Ovary (tissue), 10 donors: ENCODE measurements at regions of chr3 and their contacts with region 1.

Region 1: GRCh38 chr3:138230525-138230924 is 43.4 kb downstream of the ARMC8 start:
- DNase-seq: no peak
- H3K4me3 ChIP-seq: no peak overlapping the region
- H3K27ac ChIP-seq: no peak overlapping the region
- H3K4me1 ChIP-seq: no peaks in the 10 kb centered on the region
- H3K27me3 ChIP-seq: no peaks in the 10 kb centered on the region
- CTCF ChIP-seq: no peak
- EP300 ChIP-seq: no peak
- POLR2A ChIP-seq: no peak

Region 2: DNA sequence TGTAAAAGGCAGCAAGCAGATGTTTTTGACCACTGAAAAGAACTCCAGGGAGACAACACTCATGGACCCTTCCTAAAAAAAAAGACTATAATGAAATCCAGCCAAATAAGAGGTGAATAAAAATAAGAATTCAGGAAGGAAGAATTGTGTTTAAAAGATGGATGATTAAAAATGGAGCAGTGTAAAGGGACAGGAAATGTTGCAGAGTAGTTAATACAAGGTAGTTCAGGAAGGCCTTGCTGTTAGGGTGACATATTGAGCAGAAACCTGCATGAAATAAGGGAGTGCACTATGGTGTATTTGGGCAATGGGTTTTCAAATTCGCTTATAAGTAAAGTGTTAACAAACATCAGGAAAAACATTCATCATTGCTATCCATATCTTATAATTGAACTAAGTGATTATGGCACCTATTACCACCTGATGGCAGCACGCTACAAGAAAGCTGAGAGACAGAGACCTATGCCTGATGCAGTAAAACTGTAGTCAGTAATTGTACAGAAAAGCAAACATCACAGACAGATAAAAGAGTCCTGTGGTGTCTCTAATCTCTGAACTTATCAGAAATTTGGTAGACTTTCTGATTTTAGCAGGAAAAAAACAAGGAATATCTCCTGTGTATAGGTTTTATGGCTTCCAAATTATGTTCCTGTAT is 50.0 kb before region 1 on chr3:
- intact Hi-C with region 1: loop called in 1 of 4 experiments (anchors 5 kb)
- DNase-seq: no peak
- H3K4me3 ChIP-seq: no peak overlapping the region
- H3K27ac ChIP-seq: no peak overlapping the region
- H3K4me1 ChIP-seq: no peaks in the 10 kb centered on the region
- H3K27me3 ChIP-seq: no peaks in the 10 kb centered on the region
- CTCF ChIP-seq: no peak
- EP300 ChIP-seq: no peak
- POLR2A ChIP-seq: no peak

Region 3: DNA sequence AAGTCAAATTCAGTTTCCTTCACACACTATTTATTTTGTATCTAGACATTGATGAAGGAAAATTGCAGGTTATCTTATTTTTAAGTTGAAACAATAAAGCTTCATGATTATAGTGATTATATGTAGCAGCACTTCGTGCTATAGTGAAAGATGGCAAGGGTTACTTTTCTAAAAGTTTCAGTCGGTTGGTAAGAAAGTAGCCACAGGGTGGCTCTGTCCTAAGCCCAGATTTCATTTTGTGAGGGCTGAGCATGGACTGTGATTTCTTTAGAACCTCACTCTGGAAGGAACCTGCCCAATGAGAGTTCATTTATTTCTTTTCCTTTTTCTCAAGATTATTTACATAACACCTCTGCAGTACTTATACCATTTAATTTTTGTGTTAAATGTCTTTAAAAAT is 32.6 kb after region 1 on chr3:
- intact Hi-C with region 1: no loop called
- DNase-seq: no peak
- H3K4me3 ChIP-seq: no peak overlapping the region
- H3K27ac ChIP-seq: no peak overlapping the region
- H3K4me1 ChIP-seq: no peaks in the 10 kb centered on the region
- H3K27me3 ChIP-seq: no peaks in the 10 kb centered on the region
- CTCF ChIP-seq: no peak
- EP300 ChIP-seq: no peak
- POLR2A ChIP-seq: no peak